IMR-90 (cell line): ENCODE measurements at regions of chr11 and their contacts with region 1.

Region 1: GRCh38 chr11:59534676-59535075 is 23.3 kb downstream of the OR4D9 start:
- DNase-seq: no peak
- ATAC-seq: no peak
- H3K4me3 ChIP-seq: no peak overlapping the region
- H3K27ac ChIP-seq: no peak overlapping the region
- H3K4me1 ChIP-seq: no peaks in the 10 kb centered on the region
- H3K27me3 ChIP-seq: peaks cover 2% of the 10 kb centered on the region; the same call in 1 of the 2 replicates
- CTCF ChIP-seq: no peak
- POLR2A ChIP-seq: no peak
- RAD21 ChIP-seq: no peak

Region 2: GRCh38 chr11:59802639-59803176 is 268.0 kb after region 1 on chr11:
- CTCF ChIA-PET with region 1: no interaction called
- POLR2A ChIA-PET with region 1: no interaction called
- dilution Hi-C with region 1: no loop called
- in situ Hi-C with region 1: no loop called
- intact Hi-C with region 1: loop called (anchors 5 kb)
- DNase-seq: peak; percentile 58
- ATAC-seq: peak; percentile 79
- H3K4me3 ChIP-seq: no peak overlapping the region
- H3K27ac ChIP-seq: no peak overlapping the region
- H3K4me1 ChIP-seq: no peaks in the 10 kb centered on the region
- H3K27me3 ChIP-seq: no peaks in the 10 kb centered on the region
- CTCF ChIP-seq: peak; percentile 77
- POLR2A ChIP-seq: no peak
- RAD21 ChIP-seq: peak; percentile 84